HEK293 (cell line): ENCODE measurements at regions of chr1 and their contacts with region 1.

Region 1: DNA sequence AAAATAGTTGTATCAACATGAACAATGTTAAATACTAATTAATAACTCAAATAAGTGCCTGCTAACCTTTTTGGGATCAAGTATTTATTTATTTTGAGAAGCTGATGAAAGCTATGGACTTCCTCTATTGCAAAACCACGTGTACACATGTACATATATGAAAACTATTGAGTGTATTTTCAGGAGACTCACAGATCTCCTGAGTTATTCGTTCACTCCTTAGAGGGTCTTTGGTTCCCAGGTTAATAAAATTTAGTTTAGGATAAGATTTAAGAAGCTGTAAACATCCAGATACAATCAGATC is 130.5 kb downstream of the DISC1 start:
- H3K4me3 ChIP-seq: no peak overlapping the region
- H3K27ac ChIP-seq: no peak overlapping the region
- H3K4me1 ChIP-seq: no peaks in the 10 kb centered on the region
- CTCF ChIP-seq: no peak

Region 2: GRCh38 chr1:231724876-231725724 is 32.0 kb before region 1 on chr1:
- CTCF ChIA-PET with region 1: interaction called, 16 read pairs
- POLR2A ChIA-PET with region 1: no interaction called
- H3K4me3 ChIP-seq: no peak overlapping the region
- H3K27ac ChIP-seq: no peak overlapping the region
- H3K4me1 ChIP-seq: no peaks in the 10 kb centered on the region
- CTCF ChIP-seq: peak; percentile 31; the same call in 1 of the 2 replicates

Region 3: DNA sequence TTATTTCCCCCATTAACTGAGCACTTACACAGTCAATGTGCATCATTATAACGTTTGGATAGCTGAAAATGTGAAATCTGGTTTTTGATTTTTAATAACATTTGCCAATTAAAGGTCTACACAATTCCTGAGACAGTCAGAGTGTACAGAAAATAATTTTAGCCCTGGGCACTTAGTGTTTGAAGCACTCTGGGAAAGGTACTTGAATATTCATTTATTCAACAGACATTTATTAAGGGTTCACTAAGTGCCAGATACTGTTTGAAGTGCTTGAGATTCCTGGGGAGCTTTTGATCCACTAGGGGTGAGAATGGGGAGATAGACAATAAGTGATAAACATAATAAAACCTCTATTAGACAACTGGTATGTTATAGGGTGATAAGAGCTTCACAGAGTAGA is 11.4 kb after region 1 on chr1:
- CTCF ChIA-PET with region 1: interaction called, 69 read pairs
- POLR2A ChIA-PET with region 1: no interaction called
- H3K4me3 ChIP-seq: no peak overlapping the region
- H3K27ac ChIP-seq: no peak overlapping the region
- H3K4me1 ChIP-seq: no peaks in the 10 kb centered on the region
- CTCF ChIP-seq: no peak

Region 4: GRCh38 chr1:231786126-231786525 is 29.1 kb after region 1 on chr1:
- CTCF ChIA-PET with region 1: interaction called, 23 read pairs
- POLR2A ChIA-PET with region 1: no interaction called
- H3K4me3 ChIP-seq: no peak overlapping the region
- H3K27ac ChIP-seq: no peak overlapping the region
- H3K4me1 ChIP-seq: no peaks in the 10 kb centered on the region
- CTCF ChIP-seq: no peak

Region 5: GRCh38 chr1:231806623-231807495 is 49.8 kb after region 1 on chr1:
- CTCF ChIA-PET with region 1: interaction called, 148 read pairs
- POLR2A ChIA-PET with region 1: interaction called, 3 read pairs
- H3K4me3 ChIP-seq: no peak overlapping the region
- H3K27ac ChIP-seq: no peak overlapping the region
- H3K4me1 ChIP-seq: no peaks in the 10 kb centered on the region
- CTCF ChIP-seq: peak; percentile 69; the same call in 1 of the 2 replicates

Region 6: GRCh38 chr1:231866392-231867331 is 109.6 kb after region 1 on chr1:
- CTCF ChIA-PET with region 1: interaction called, 18 read pairs
- POLR2A ChIA-PET with region 1: no interaction called
- H3K4me3 ChIP-seq: no peak overlapping the region
- H3K27ac ChIP-seq: no peak overlapping the region
- H3K4me1 ChIP-seq: no peaks in the 10 kb centered on the region; the same call in 1 of the 2 replicates
- CTCF ChIP-seq: peak; percentile 85